ENCODE measurements at regions of chr1 and their contacts with region 1.

Region 1: DNA sequence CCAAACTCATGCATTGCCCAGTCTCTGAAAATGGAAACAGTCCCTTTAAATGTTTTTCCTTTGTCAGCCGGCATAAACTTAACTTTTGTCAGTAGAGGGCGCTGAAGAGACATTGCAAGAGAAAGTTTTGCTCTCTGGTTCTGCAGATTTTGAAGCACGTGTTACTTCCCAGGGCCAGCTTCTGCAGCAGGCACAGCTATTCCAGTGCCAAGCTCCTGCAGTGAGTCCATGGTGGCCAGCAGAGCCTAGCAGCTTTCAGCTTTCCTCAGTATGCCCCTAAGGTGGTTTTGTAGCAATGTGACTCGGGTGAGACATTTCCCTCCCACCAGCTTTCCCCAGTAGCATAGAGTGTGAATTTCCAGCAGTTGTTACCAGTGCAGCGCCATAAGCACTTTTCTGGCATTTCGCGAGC is 2.6 kb upstream of the IFI44L start:
- DNase-seq: peak; percentile 41 to 69
- ATAC-seq: peak; percentile 81 to 94
- H3K4me3 ChIP-seq: no peak overlapping the region
- H3K27ac ChIP-seq: peak overlapping the region in 2 of 4 donors; percentile 25 to 70
- H3K4me1 ChIP-seq: peaks cover 16 to 23% of the 10 kb centered on the region in 2 donors
- H3K27me3 ChIP-seq: no peaks in the 10 kb centered on the region
- CTCF ChIP-seq: peak; percentile 63 to 90 (median 75)
- POLR2A ChIP-seq: no peak

Region 2: DNA sequence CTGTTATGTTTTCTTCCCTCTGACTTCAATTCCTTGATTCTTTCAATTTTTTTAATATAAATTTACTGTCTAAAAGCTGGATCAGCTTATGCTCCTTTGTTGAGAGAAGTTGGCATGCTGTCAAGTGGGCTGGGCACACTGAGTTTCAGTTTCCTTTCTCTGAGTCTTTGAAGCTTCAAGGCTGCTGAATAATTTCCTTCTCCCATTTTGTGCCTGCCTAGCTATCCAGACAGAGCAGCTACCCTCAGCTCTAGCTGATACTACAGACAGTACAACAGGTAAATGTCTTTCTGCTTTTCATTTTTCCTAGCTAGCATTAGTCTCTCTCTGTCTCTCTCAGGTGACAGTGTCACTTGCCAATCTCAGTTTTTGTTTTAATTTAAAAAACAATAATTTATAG is 32.0 kb after region 1 on chr1 and contains the start of gene IFI44:
- in situ Hi-C with region 1: no loop called
- intact Hi-C with region 1: loop called (anchors 2 kb)
- DNase-seq: peak; percentile 51 to 69
- ATAC-seq: peak; percentile 86 to 88
- H3K4me3 ChIP-seq: peak within 1 kb of the TSS; percentile 41 to 50 (median 46)
- H3K27ac ChIP-seq: peak within 1 kb of the TSS; percentile 56 to 67 (median 58)
- H3K4me1 ChIP-seq: peaks cover 0 to 3% of the 10 kb centered on the region in 2 donors
- H3K27me3 ChIP-seq: no peaks in the 10 kb centered on the region
- CTCF ChIP-seq: no peak
- POLR2A ChIP-seq: peak; percentile 24 to 60
- total RNA-seq, gene IFI44: 2.6 to 3.1 (median 2.8) TPM

Region 3: GRCh38 chr1:78676347-78676982 is 58.8 kb after region 1 on chr1:
- in situ Hi-C with region 1: loop called (anchors 5 to 10 kb)
- intact Hi-C with region 1: loop called (anchors 1 kb)
- DNase-seq: peak in 1 of 2 donors; percentile 15
- ATAC-seq: no peak
- H3K4me3 ChIP-seq: no peak overlapping the region
- H3K27ac ChIP-seq: no peak overlapping the region
- H3K4me1 ChIP-seq: no peaks in the 10 kb centered on the region
- H3K27me3 ChIP-seq: no peaks in the 10 kb centered on the region
- CTCF ChIP-seq: peak; percentile 63 to 87 (median 82)
- POLR2A ChIP-seq: no peak

Region 4: GRCh38 chr1:78869136-78869535 is 251.5 kb after region 1 on chr1:
- in situ Hi-C with region 1: no loop called
- intact Hi-C with region 1: no loop called
- DNase-seq: no peak
- ATAC-seq: no peak
- H3K4me3 ChIP-seq: no peak overlapping the region
- H3K27ac ChIP-seq: no peak overlapping the region
- H3K4me1 ChIP-seq: no peaks in the 10 kb centered on the region
- H3K27me3 ChIP-seq: no peaks in the 10 kb centered on the region
- CTCF ChIP-seq: no peak
- POLR2A ChIP-seq: no peak